GM10248 (cell line): ENCODE measurements at regions of chr6 and their contacts with region 1.

Region 1: GRCh38 chr6:97864826-97865225 is 581.8 kb upstream of the MMS22L start:
- DNase-seq: no peak
- CTCF ChIP-seq: no peak

Region 2: GRCh38 chr6:97790926-97791590 is 73.8 kb before region 1 on chr6:
- CTCF ChIA-PET with region 1: no interaction called
- POLR2A ChIA-PET with region 1: no interaction called
- DNase-seq: no peak
- CTCF ChIP-seq: no peak

Region 3: GRCh38 chr6:97813889-97814567 is 50.8 kb before region 1 on chr6:
- CTCF ChIA-PET with region 1: no interaction called
- POLR2A ChIA-PET with region 1: no interaction called
- DNase-seq: no peak
- CTCF ChIP-seq: no peak

Region 4: DNA sequence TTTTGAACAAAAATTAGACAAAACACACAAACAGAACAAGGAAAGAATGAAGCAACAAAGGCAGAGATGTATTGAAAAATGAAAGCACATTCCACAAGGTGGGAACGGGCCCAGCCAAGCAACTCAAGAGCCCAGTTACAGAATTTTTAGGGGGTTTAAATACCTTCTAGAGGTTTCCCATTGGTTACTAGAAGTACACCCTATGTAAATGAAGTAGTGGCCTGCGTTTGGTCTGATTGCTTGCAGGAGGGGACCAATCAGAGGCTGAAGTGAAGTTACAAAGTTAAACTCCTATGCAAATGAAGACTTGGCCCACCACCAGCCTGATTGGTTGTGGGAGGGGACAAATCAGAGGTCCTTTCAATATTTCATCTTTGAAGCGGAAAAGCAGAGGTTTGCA is 11.9 kb after region 1 on chr6:
- CTCF ChIA-PET with region 1: interaction called, 12 read pairs
- POLR2A ChIA-PET with region 1: no interaction called
- DNase-seq: no peak
- CTCF ChIP-seq: no peak

Region 5: GRCh38 chr6:97901531-97901930 is 36.7 kb after region 1 on chr6:
- CTCF ChIA-PET with region 1: no interaction called
- POLR2A ChIA-PET with region 1: no interaction called
- DNase-seq: no peak
- CTCF ChIP-seq: no peak

Region 6: GRCh38 chr6:97939440-97940168 is 74.8 kb after region 1 on chr6:
- CTCF ChIA-PET with region 1: no interaction called
- POLR2A ChIA-PET with region 1: no interaction called
- DNase-seq: no peak
- CTCF ChIP-seq: no peak